Esophagus squamous epithelium (tissue), 5 donors: ENCODE measurements at regions of chr1 and their contacts with region 1.

Region 1: DNA sequence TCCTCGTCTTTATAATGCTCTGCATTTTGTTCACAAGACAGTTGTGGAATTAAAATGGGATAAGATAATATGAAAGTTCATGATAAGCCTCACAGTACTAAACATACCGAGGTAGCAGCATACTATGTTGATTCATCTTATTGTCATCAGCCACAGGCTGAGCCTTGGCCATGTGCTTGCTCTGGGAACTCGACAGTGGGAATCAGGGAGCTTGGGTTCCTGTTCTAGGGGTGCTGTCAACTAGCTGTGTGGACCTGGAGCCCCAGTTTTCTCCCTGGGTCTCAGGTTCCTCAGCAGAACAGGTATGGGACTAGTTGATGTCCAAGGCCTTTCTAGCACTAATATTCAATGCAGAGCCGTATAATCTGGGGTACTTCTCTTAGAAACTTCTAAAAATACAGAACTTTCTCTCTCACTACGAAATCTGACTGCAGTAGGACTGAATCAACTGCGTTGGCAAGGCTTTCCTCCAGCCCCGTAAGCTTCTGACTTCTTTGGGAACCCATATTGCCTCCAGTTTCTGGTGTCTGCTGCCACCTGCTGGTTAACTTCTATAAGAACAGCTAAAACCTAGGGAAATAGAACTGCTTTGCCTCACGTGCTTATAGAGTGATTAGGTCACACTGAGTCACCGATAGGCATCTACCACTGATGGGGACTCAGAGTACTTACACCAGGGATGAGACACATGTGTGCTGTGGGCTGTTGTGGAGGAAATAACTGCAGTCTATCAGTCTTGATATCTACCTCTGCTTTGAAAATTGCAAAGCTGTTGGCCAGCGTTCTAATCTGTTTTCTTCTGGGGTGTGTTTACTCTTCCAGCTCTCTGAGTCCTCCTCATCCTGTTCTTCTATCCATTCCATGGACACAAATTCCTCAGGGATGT is 110.9 kb downstream of the RGL1 start:
- DNase-seq: peak; percentile 18
- H3K4me3 ChIP-seq: no peak overlapping the region
- H3K27ac ChIP-seq: peak overlapping the region in 3 of 4 donors; percentile 24 to 67 (median 49)
- H3K4me1 ChIP-seq: peaks cover 4 to 27% (median 11%) of the 10 kb centered on the region in 3 donors
- H3K27me3 ChIP-seq: no peaks in the 10 kb centered on the region
- CTCF ChIP-seq: peak; percentile 63 to 93 (median 88)
- POLR2A ChIP-seq: no peak

Region 2: DNA sequence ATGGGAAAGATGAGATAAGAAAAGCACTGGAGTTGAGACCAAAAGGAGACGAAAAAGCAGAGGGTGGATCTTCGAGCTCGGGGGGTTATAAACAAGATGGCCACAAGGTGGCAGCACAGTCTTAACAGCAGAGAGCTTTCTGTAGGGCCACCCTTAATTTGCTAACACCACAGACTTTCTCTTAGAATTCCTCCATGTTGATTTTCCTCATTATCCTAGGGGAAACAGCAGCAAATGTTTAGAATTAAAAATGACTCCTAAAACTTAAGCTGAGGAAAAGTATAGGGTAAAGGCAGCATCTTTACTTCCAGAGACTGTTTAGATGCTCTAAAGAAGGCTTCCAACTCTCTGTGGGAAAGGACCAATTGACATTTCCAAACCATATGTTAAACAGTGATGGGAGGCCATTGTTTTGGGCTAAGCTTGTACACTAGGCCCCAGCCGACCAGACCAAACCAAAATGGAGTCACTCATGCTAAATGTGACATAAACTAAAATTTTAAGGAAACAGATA is 260.2 kb before region 1 on chr1:
- intact Hi-C with region 1: loop called (anchors 2 kb)
- DNase-seq: no peak
- H3K4me3 ChIP-seq: no peak overlapping the region
- H3K27ac ChIP-seq: no peak overlapping the region
- H3K4me1 ChIP-seq: peaks cover 0 to 10% (median 0%) of the 10 kb centered on the region in 3 donors
- H3K27me3 ChIP-seq: no peaks in the 10 kb centered on the region
- CTCF ChIP-seq: peak; percentile 47 to 88 (median 84)
- POLR2A ChIP-seq: no peak